CD8-positive, alpha-beta T cell (primary cell): ENCODE measurements at regions of chr1 and their contacts with region 1.

Region 1: DNA sequence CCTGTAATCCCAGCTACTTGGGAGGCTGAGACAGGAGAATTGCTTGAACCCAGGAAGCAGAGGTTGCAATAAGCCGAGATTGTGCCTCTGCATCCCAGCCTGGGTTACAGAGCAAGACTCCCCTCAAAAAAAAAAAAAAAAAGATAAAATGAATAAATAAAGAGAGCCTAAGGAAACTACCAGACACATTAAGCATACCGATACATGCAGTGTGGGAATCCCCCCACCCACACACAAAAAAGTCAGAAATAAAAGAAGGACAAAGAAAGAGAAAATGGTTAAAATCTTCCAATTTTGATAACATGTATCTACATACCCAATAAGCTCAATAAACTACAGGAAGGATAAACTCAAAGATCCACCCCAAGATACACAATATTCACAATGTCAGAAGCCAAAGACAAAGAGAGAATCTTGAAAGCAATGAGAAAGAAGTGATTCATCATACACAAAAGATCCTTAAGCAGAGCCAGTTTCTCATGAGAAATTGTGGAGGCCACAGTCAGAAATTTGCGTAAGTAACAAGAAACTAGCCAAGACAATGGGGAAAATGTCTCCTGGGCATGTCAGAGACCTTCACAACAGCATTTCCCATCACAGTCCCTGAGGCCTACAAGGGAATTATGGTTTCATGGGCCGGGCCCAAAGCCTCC is 1197.0 kb downstream of the AMY1C start:
- DNase-seq: no peak
- ATAC-seq: no peak
- H3K4me3 ChIP-seq: no peak overlapping the region
- H3K4me3 Mint-ChIP-seq: no peak overlapping the region
- H3K27ac ChIP-seq: no peak overlapping the region
- H3K27ac Mint-ChIP-seq: no peak overlapping the region
- H3K4me1 ChIP-seq: no peaks in the 10 kb centered on the region
- H3K4me1 Mint-ChIP-seq: no peaks in the 10 kb centered on the region
- H3K27me3 ChIP-seq: no peaks in the 10 kb centered on the region
- H3K27me3 Mint-ChIP-seq: no peaks in the 10 kb centered on the region
- CTCF ChIP-seq: no peak

Region 2: DNA sequence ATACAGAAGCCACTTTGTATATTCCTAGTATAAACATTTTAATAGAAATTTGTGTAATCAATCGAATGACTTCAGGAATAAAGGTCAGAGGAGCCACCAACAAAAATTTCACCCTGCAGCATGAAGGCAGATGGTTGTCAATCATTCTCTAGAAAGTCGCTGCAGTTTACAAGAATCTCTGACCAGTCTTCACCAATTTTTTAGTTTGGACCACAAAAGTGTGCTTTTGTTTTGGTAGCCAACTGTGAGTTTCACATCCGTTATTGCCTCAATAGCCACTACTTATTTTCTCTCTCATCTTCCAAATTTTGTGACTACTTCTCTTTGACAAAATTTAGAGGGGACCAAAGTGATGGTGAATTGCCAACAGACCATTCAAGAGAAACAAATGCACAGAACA is 41.4 kb before region 1 on chr1:
- CTCF ChIA-PET with region 1: no interaction called
- POLR2A ChIA-PET with region 1: no interaction called
- intact Hi-C with region 1: loop called in 1 of 2 experiments (anchors 1 kb)
- DNase-seq: no peak
- ATAC-seq: no peak
- H3K4me3 ChIP-seq: no peak overlapping the region
- H3K4me3 Mint-ChIP-seq: no peak overlapping the region
- H3K27ac ChIP-seq: no peak overlapping the region
- H3K27ac Mint-ChIP-seq: no peak overlapping the region
- H3K4me1 ChIP-seq: no peaks in the 10 kb centered on the region
- H3K4me1 Mint-ChIP-seq: no peaks in the 10 kb centered on the region
- H3K27me3 ChIP-seq: no peaks in the 10 kb centered on the region
- H3K27me3 Mint-ChIP-seq: no peaks in the 10 kb centered on the region
- CTCF ChIP-seq: no peak